HAP-1 (cell line): ENCODE measurements at regions of chr2 and their contacts with region 1.

Region 1: GRCh38 chr2:74334931-74335333 is 8.3 kb downstream of the SLC4A5 start:
- DNase-seq: peak; percentile 79 to 88
- H3K4me3 ChIP-seq: no peak overlapping the region
- H3K4me1 ChIP-seq: no peaks in the 10 kb centered on the region
- H3K27me3 ChIP-seq: no peaks in the 10 kb centered on the region

Region 2: GRCh38 chr2:74250189-74250631 is 84.7 kb before region 1 on chr2:
- in situ Hi-C with region 1: loop called (anchors 5 kb)
- DNase-seq: peak; percentile 48 to 66
- H3K4me3 ChIP-seq: no peak overlapping the region
- H3K4me1 ChIP-seq: no peaks in the 10 kb centered on the region
- H3K27me3 ChIP-seq: no peaks in the 10 kb centered on the region